MCF 10A (cell line): ENCODE measurements at regions of chr5 and their contacts with region 1.

Region 1: GRCh38 chr5:147576646-147577535 is 67.0 kb upstream of the DPYSL3 start:
- DNase-seq: peak; percentile 68
- H3K4me3 Mint-ChIP-seq: no peak overlapping the region
- H3K27ac Mint-ChIP-seq: no peak overlapping the region
- H3K4me1 Mint-ChIP-seq: no peaks in the 10 kb centered on the region
- H3K27me3 Mint-ChIP-seq: no peaks in the 10 kb centered on the region
- CTCF ChIP-seq: peak; percentile 99

Region 2: GRCh38 chr5:147223948-147224791 is 352.7 kb before region 1 on chr5:
- CTCF ChIA-PET with region 1: interaction called, 86 read pairs
- POLR2A ChIA-PET with region 1: no interaction called
- intact Hi-C with region 1: loop called (anchors 1 kb)
- DNase-seq: peak; percentile 78
- H3K4me3 Mint-ChIP-seq: no peak overlapping the region
- H3K27ac Mint-ChIP-seq: no peak overlapping the region
- H3K4me1 Mint-ChIP-seq: peaks cover 7% of the 10 kb centered on the region
- H3K27me3 Mint-ChIP-seq: peaks cover 44% of the 10 kb centered on the region
- CTCF ChIP-seq: peak; percentile 87

Region 3: GRCh38 chr5:147403651-147404640 is 172.9 kb before region 1 on chr5:
- CTCF ChIA-PET with region 1: interaction called, 40 read pairs
- POLR2A ChIA-PET with region 1: interaction called, 3 read pairs
- intact Hi-C with region 1: no loop called
- DNase-seq: peak; percentile 95
- H3K4me3 Mint-ChIP-seq: no peak overlapping the region
- H3K27ac Mint-ChIP-seq: peak overlapping the region; percentile 91
- H3K4me1 Mint-ChIP-seq: peaks cover 20% of the 10 kb centered on the region
- H3K27me3 Mint-ChIP-seq: no peaks in the 10 kb centered on the region
- CTCF ChIP-seq: no peak

Region 4: DNA sequence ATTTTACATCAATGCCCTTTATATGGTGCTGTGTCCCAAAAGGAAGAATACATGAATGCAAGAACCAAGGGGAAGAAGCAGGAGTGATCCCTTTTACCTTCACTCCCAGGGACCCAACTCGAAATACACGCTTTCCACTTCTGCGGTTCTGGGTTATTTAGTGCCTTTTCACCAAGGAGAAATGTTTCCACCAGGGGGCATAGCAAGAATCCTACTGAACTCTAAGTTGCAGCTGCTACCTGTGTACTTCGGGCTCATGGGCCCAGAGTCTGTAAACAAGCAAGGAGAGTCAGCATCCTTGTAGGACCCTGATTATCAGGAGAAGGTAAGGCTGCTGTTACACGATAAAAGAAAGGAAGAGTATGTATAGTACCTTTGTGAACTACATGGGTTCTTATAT is 112.7 kb before region 1 on chr5:
- CTCF ChIA-PET with region 1: interaction called, 69 read pairs
- POLR2A ChIA-PET with region 1: interaction called, 3 read pairs
- intact Hi-C with region 1: loop called (anchors 1 kb)
- DNase-seq: peak; percentile 68
- H3K4me3 Mint-ChIP-seq: no peak overlapping the region
- H3K27ac Mint-ChIP-seq: no peak overlapping the region
- H3K4me1 Mint-ChIP-seq: no peaks in the 10 kb centered on the region
- H3K27me3 Mint-ChIP-seq: no peaks in the 10 kb centered on the region
- CTCF ChIP-seq: peak; percentile 63

Region 5: DNA sequence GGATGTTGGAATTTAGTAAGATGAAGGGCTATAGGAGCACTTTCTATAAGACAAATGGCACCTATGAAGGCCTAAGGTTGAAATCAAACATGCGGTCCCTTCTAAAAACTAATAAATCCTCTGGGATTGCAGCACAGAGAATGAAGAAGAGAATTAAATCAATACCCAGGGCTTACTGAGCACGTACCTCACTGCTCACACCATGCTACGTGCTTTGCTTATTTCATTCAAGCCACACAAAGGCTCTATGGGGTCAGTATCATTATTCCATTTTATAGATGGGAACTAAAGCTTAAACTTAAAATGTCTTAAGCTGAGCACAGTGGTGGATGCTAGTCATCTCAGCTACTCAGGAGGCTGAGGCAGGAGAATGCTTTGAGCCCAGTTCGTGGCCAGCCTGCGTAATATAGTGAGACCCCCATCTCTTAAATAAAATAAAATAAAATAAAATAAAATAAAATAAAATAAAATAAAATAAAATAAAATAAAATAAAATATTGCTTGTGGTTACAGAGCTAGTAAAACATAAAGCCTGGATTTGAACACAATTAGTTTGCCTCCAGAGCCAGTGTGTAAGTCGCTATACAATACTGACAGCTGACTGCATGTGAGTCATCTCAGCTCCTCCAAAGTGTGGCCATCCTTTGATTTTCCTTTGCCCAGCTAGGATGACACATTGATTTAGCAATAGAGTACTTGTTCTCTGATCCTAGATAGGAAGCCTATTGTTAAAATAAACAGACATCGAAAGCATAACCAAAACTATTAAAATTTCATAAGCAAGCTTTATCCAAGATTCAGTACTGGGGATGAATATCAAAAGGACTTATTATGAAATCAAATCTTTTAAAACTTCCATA is 46.1 kb before region 1 on chr5:
- CTCF ChIA-PET with region 1: interaction called, 30 read pairs
- POLR2A ChIA-PET with region 1: no interaction called
- intact Hi-C with region 1: no loop called
- DNase-seq: peak; percentile 95
- H3K4me3 Mint-ChIP-seq: peak overlapping the region; percentile 45
- H3K27ac Mint-ChIP-seq: peak overlapping the region; percentile 33
- H3K4me1 Mint-ChIP-seq: peaks cover 33% of the 10 kb centered on the region
- H3K27me3 Mint-ChIP-seq: no peaks in the 10 kb centered on the region
- CTCF ChIP-seq: no peak

Region 6: DNA sequence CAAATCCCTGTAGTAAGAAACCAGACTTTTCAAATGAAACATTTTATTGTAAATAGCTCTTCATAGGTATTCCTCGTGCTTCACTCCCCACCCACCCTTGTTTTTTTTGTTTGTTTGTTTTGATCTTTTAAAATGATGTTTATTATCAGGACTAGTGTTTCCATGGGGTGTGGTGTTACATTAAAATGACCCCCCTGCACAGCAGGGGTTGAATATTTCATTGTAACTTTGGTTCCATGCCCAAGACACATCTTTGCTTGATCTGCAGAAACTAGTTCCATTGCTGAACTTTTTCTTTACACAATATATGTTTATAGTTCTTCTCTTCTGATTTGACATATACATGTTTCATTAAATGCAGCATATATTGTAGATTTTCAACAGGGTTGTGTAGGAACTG is 14.2 kb after region 1 on chr5:
- CTCF ChIA-PET with region 1: interaction called, 38 read pairs
- POLR2A ChIA-PET with region 1: no interaction called
- intact Hi-C with region 1: no loop called
- DNase-seq: no peak
- H3K4me3 Mint-ChIP-seq: no peak overlapping the region
- H3K27ac Mint-ChIP-seq: no peak overlapping the region
- H3K4me1 Mint-ChIP-seq: no peaks in the 10 kb centered on the region
- H3K27me3 Mint-ChIP-seq: peaks cover 26% of the 10 kb centered on the region
- CTCF ChIP-seq: no peak